ENCODE measurements at regions of chr17 and their contacts with region 1.

Region 1: DNA sequence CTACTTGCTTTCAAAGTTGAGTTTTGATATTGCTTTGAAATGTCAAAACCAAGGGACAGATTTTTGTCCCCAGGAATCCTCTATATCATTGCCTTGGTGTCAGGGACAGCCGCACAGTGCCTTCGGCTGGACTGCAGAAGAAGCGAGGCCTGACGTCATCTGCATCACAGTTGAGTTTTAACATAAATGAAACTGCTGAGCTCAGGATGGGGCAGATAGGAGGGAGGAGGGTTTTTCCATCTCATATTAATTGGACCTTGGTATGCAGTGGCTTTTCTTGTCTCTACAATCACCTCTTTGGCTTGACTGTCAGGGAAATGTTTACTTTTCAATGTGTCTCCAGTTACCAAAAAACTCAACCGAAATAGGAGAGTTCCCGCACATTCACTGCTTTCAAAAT is 111.3 kb downstream of the AATF start:
- DNase-seq: no peak
- ATAC-seq: no peak
- H3K4me3 ChIP-seq: no peak overlapping the region
- H3K27ac ChIP-seq: no peak overlapping the region
- H3K4me1 ChIP-seq: no peaks in the 10 kb centered on the region
- H3K27me3 ChIP-seq: no peaks in the 10 kb centered on the region
- CTCF ChIP-seq: no peak
- EP300 ChIP-seq: no peak
- POLR2A ChIP-seq: no peak
- RAD21 ChIP-seq: no peak

Region 2: DNA sequence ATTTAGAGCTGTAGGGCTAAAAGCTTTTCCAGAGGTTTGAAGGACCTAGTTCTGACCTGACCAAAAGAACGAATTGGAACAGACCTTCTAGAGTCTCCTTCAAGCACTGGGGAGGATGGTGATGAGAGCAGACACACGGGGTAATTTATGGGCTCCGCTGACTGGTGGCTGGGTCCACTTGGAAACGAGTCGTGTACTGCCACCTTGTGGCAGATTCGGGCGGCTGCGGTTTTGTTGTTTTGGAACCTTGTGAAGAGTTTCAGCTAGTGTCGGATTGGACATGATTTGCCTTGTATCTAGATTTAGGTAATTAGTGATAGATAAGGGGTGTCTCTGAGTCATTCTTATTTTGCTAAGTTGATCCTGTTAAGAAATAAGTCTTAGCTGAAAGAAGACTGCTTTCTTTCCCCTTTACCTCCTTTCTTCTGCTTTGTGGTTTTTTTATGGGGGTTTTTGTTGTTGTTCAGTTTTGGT is 12.4 kb before region 1 on chr17:
- CTCF ChIA-PET with region 1: interaction called, 14 read pairs
- POLR2A ChIA-PET with region 1: interaction called, 3 read pairs
- RAD21 ChIA-PET with region 1: interaction called, 3 read pairs
- SMC1A ChIA-PET with region 1: no interaction called
- in situ Hi-C with region 1: no loop called
- intact Hi-C with region 1: no loop called
- DNase-seq: peak; percentile 17
- ATAC-seq: peak; percentile 95
- H3K4me3 ChIP-seq: no peak overlapping the region
- H3K27ac ChIP-seq: no peak overlapping the region
- H3K4me1 ChIP-seq: no peaks in the 10 kb centered on the region
- H3K27me3 ChIP-seq: no peaks in the 10 kb centered on the region
- CTCF ChIP-seq: peak; percentile 83 to 88 (median 85)
- EP300 ChIP-seq: no peak
- POLR2A ChIP-seq: no peak
- RAD21 ChIP-seq: peak; percentile 79

Region 3: DNA sequence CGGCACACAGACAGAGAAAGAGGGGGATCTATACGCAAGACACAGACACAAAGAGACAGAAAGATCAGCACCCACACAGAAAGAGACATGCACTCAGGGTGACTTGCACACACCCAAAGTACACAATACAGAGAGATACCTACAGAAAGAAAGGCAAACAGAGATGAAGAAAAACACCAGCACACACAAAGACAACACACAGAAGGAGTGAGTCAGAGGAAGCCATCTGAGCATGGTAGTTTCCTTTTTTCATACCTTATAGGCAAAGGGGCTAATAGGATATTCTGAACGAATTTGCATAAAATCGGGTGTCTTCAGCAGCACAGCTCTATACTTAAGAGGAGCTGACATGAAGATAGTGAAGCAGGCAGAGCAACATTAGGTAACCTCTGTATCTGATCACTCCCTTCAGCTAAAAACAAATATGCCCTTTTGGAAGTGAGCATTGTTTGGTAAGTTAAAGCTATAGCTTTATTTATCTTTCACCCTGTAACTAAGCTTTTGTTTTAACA is 87.3 kb after region 1 on chr17:
- CTCF ChIA-PET with region 1: no interaction called
- POLR2A ChIA-PET with region 1: no interaction called
- RAD21 ChIA-PET with region 1: no interaction called
- SMC1A ChIA-PET with region 1: no interaction called
- in situ Hi-C with region 1: no loop called
- intact Hi-C with region 1: no loop called
- DNase-seq: peak; percentile 27
- ATAC-seq: peak; percentile 97
- H3K4me3 ChIP-seq: peak overlapping the region; percentile 21; the same call in 1 of the 2 replicates
- H3K27ac ChIP-seq: peak overlapping the region; percentile 34
- H3K4me1 ChIP-seq: peaks cover 18% of the 10 kb centered on the region
- H3K27me3 ChIP-seq: no peaks in the 10 kb centered on the region
- CTCF ChIP-seq: no peak
- EP300 ChIP-seq: no peak
- POLR2A ChIP-seq: peak; percentile 34; the same call in 1 of the 2 replicates
- RAD21 ChIP-seq: no peak